BJ (cell line): ENCODE measurements at regions of chr10 and their contacts with region 1.

Region 1: DNA sequence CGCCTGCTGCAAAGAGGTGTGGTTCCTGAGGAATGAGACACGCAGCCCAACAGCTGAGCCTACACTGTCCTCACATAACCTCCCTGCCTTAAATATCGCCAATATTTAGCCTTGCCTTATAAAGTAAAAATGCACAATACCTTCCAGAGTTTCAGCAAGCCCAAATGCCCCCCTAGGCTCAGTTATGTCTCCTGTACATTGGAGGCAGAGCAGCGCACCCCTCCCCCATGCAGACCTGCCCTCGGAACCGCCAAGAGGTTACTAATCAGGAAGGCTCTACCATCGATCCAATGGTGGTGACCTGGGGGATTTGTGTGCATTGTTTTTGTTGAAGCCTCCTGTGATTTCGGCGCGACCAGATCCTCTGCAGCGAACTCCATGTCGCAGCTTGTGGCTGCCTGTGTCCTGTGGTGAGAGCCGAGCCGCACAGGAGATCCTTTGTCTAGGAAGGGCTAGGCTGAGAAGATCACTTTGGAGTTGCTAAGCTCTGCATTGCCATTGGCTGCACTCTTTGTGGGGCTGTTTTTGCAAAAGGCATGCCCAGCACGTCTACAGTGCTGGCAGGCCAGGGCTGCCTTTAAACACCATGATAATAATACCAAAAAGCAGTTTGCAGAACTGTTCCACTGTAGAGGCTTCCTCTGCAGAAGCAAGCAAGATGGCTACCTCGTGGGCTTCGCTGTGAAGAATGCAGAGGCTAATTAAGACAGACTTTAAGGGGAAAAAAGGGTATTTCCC is 40.1 kb downstream of the TET1 start:
- DNase-seq: peak; percentile 58
- H3K4me3 ChIP-seq: peak overlapping the region; percentile 28
- H3K27me3 ChIP-seq: no peaks in the 10 kb centered on the region
- CTCF ChIP-seq: no peak

Region 2: GRCh38 chr10:68550747-68551411 is 49.3 kb before region 1 on chr10:
- CTCF ChIA-PET with region 1: interaction called, 11 read pairs
- POLR2A ChIA-PET with region 1: no interaction called
- DNase-seq: no peak
- H3K4me3 ChIP-seq: no peak overlapping the region
- H3K27me3 ChIP-seq: no peaks in the 10 kb centered on the region
- CTCF ChIP-seq: peak; percentile 90

Region 3: GRCh38 chr10:68560186-68560942 is 39.8 kb before region 1 on chr10 and contains the start of gene TET1:
- CTCF ChIA-PET with region 1: interaction called, 5 read pairs
- POLR2A ChIA-PET with region 1: interaction called, 11 read pairs
- DNase-seq: no peak
- H3K4me3 ChIP-seq: peak within 1 kb of the TSS; percentile 77
- H3K27me3 ChIP-seq: no peaks in the 10 kb centered on the region
- CTCF ChIP-seq: no peak
- polyA plus RNA-seq, gene TET1: 1.1 and 1.9 TPM in 2 replicates